Lower leg skin (tissue), 4 donors: ENCODE measurements at regions of chr18 and their contacts with region 1.

Region 1: DNA sequence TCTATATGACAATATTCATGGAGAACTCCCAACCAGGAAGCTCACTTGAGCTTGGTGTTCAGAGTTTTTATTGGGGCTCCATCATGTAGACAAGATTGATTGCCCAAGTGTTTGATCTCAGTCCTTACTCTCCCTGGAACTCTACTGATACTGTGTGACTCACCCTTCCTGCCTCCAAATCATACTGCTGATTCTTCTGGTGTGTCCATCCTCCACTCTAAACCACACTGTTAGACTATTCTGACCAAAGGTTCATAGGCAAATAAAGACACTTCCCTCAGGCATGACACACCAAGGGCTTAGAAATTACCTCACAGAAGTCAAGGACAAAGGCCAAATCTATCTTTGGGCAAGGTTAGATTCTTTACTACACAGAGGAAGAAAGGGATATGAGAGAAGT is 107.9 kb upstream of the CDH20 start:
- DNase-seq: no peak
- H3K4me3 ChIP-seq: no peak overlapping the region
- CTCF ChIP-seq: no peak
- POLR2A ChIP-seq: no peak

Region 2: GRCh38 chr18:61635901-61636528 is 410.7 kb after region 1 on chr18:
- intact Hi-C with region 1: loop called (anchors 5 kb)
- DNase-seq: peak in 1 of 2 donors; percentile 40
- H3K4me3 ChIP-seq: no peak overlapping the region
- CTCF ChIP-seq: no peak
- POLR2A ChIP-seq: no peak

Region 3: GRCh38 chr18:61926532-61926931 is 701.2 kb after region 1 on chr18:
- intact Hi-C with region 1: no loop called
- DNase-seq: no peak
- H3K4me3 ChIP-seq: no peak overlapping the region
- CTCF ChIP-seq: no peak
- POLR2A ChIP-seq: no peak